WTC11 (cell line): ENCODE measurements at regions of chr10 and their contacts with region 1.

Region 1: GRCh38 chr10:59817773-59818172 is 64.5 kb upstream of the MRLN start:
- DNase-seq: no peak
- ATAC-seq: no peak
- H3K4me3 Mint-ChIP-seq: no peak overlapping the region
- H3K27ac Mint-ChIP-seq: no peak overlapping the region
- H3K4me1 Mint-ChIP-seq: peaks cover 29% of the 10 kb centered on the region
- H3K27me3 Mint-ChIP-seq: no peaks in the 10 kb centered on the region
- CTCF ChIP-seq: no peak

Region 2: DNA sequence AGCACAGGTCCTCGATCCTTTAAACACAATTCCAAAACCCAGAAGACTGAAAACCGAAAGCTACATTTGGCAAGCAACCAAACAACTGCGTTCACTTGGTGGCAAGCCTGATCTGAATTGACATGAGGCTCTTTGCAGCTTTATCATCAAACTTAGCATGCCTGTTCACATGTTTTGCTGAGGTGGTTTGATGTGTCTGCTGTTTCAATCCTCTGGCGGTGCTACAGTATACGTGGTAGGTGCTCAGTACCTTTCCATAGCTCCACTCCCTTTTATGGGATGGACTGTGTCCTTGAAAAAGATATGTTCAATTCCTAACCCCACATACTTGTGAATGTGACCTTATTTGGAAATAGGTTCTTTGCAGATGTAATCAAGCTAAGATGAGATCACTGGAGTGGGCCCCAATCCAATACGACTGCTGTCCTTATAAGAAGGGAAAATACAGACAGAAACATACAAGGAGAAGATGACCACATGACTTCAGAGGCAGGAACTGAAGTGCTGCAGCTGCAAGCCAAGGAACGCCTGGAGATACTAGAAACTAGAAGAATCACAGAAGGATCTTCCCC is 55.2 kb after region 1 on chr10:
- CTCF ChIA-PET with region 1: no interaction called
- POLR2A ChIA-PET with region 1: interaction called, 12 read pairs
- DNase-seq: no peak
- ATAC-seq: no peak
- H3K4me3 Mint-ChIP-seq: no peak overlapping the region
- H3K27ac Mint-ChIP-seq: peak overlapping the region; percentile 28; the same call in 1 of the 2 replicates
- H3K4me1 Mint-ChIP-seq: peaks cover 82% of the 10 kb centered on the region
- H3K27me3 Mint-ChIP-seq: no peaks in the 10 kb centered on the region; the same call in 1 of the 2 replicates
- CTCF ChIP-seq: no peak